Mammary epithelial cell (primary cell): ENCODE measurements at regions of chr3 and their contacts with region 1.

Region 1: DNA sequence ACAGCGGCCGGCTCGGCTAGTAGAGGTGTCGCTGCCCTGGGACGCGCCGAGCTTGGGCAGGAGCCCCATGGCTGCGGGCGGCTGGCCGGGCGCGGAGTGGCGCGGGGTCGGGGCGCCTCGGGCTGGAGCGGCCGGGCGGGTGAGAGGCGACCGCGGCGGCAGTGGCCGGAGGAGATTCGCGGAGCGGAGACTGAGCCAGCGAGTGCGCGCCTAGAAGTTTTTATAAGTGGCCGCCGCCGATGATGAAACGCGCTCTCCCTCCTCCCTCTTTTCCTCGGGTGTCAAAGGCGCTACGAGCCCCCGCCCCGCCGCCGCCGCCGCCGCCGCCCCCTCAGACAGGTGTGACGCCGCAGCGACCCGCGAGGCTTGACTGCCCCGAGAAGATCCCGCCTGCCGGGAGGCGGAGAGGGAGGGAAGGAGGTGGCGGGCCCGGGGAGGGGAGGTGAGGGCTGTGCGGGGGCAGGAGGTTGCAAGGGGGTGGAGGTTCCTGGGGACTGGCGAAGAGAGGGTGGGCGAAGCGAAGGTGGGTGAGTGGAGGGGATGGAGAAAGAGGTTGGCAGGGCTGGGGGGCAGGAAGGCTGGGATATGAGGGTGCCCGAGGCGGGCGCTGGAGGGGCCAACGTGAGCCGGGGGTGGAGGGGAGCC is at the start of gene SLCO2A1:
- DNase-seq: peak; percentile 30
- H3K4me3 ChIP-seq: peak within 1 kb of the TSS; percentile 39 to 61 (median 55)
- H3K27ac ChIP-seq: no peak within 1 kb of the TSS
- H3K4me1 ChIP-seq: peaks cover 13% of the 10 kb centered on the region
- H3K27me3 ChIP-seq: no peaks in the 10 kb centered on the region
- CTCF ChIP-seq: no peak
- total RNA-seq, gene SLCO2A1: 0.38 to 2.2 TPM

Region 2: DNA sequence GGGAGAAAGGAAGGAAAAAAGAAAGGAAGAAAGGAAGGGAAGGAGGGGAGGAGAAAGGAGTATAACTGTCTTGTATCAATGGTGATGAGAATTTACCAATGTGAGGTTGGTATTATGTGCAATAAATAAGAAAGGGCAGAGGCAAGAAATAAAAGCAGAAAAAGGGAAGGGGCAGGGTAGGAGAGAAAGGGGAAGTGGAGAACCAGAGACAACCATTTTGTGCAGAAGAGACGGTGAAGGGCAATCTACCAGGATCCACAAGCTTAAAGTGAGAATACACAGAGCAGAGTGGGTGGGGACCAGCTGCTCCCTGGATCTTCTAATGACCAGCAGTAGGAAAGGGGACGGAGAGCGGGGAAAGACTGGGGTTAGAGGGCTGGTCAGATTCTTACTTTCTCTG is 106.7 kb after region 1 on chr3:
- CTCF ChIA-PET with region 1: no interaction called
- dilution Hi-C with region 1: loop called (anchors 5 kb)
- in situ Hi-C with region 1: no loop called
- intact Hi-C with region 1: no loop called
- DNase-seq: no peak
- H3K4me3 ChIP-seq: no peak overlapping the region
- H3K27ac ChIP-seq: no peak overlapping the region
- H3K4me1 ChIP-seq: no peaks in the 10 kb centered on the region
- H3K27me3 ChIP-seq: no peaks in the 10 kb centered on the region
- CTCF ChIP-seq: no peak